Endothelial cell of umbilical vein (primary cell): ENCODE measurements at regions of chr1 and their contacts with region 1.

Region 1: GRCh38 chr1:200979574-200980451 is 43.7 kb downstream of the KIF21B start:
- DNase-seq: peak; percentile 4
- H3K4me3 ChIP-seq: no peak overlapping the region
- H3K27ac ChIP-seq: no peak overlapping the region
- H3K4me1 ChIP-seq: no peaks in the 10 kb centered on the region
- H3K27me3 ChIP-seq: no peaks in the 10 kb centered on the region
- CTCF ChIP-seq: peak; percentile 50 to 69
- POLR2A ChIP-seq: no peak

Region 2: DNA sequence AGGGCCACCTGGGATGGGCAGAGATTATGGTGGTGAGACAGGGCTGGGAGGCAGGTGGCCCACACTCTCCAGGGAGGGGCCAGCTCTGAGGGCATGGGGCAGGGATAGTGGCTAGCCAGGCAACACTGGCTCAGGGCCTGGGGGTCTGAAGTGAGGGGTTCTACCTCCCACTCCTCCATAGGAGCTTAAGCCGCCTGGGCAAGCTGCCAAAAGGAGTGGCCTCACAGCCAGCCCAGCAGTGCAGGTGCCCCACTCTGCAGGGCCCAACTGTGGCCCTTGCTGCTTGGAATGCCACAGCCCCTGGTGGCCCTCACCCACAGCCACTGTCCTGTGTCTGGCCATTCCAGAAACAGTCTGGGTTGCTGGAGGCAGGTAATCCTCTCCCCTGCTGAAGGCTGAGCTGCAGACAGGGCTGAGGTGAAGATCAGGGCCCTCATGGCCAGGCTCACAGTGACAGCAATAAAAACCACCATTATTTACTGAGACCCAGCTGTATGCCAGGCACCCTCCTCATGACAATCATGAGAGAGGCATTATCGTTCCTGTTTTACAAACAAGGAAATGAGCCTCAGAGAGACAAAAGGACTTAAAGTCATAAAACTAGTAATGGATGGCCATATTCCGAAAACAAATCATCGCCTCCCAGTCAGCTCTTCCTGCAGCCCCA is 12.7 kb after region 1 on chr1:
- CTCF ChIA-PET with region 1: interaction called, 10 read pairs
- POLR2A ChIA-PET with region 1: no interaction called
- dilution Hi-C with region 1: no loop called
- intact Hi-C with region 1: no loop called
- DNase-seq: no peak
- H3K4me3 ChIP-seq: no peak overlapping the region
- H3K27ac ChIP-seq: no peak overlapping the region
- H3K4me1 ChIP-seq: no peaks in the 10 kb centered on the region
- H3K27me3 ChIP-seq: no peaks in the 10 kb centered on the region
- CTCF ChIP-seq: no peak
- POLR2A ChIP-seq: no peak

Region 3: GRCh38 chr1:201016211-201016651 is 36.4 kb after region 1 on chr1:
- CTCF ChIA-PET with region 1: interaction called, 94 read pairs
- POLR2A ChIA-PET with region 1: no interaction called
- dilution Hi-C with region 1: no loop called
- intact Hi-C with region 1: no loop called
- DNase-seq: peak; percentile 34
- H3K4me3 ChIP-seq: no peak overlapping the region
- H3K27ac ChIP-seq: peak overlapping the region; percentile 4
- H3K4me1 ChIP-seq: peaks cover 36% of the 10 kb centered on the region
- H3K27me3 ChIP-seq: no peaks in the 10 kb centered on the region
- CTCF ChIP-seq: no peak
- POLR2A ChIP-seq: no peak

Region 4: DNA sequence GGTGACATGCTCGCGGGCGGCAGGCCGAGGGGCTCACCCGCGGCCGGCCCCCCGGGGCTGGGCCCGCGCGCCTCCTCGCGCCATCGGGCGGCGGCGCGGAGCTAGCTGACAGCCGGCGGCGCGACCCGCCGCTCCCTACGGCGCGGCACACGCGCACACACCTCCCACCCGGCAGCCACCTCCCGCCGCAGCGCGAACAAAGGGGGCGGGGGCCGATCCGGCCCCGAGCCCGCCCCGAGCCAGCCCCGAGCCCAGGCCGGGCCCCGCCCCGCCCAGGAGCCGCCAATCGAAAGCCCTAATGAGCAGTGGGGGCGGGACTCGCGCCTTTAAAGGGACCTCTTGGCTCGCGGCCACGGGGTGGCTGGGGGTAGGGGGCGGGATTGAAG is 43.7 kb after region 1 on chr1 and contains the start of gene KIF21B:
- CTCF ChIA-PET with region 1: interaction called, 94 read pairs
- POLR2A ChIA-PET with region 1: no interaction called
- dilution Hi-C with region 1: no loop called
- intact Hi-C with region 1: no loop called
- DNase-seq: peak; percentile 75
- H3K4me3 ChIP-seq: peak within 1 kb of the TSS; percentile 11 to 49 (median 13)
- H3K27ac ChIP-seq: no peak within 1 kb of the TSS
- H3K4me1 ChIP-seq: peaks cover 37% of the 10 kb centered on the region
- H3K27me3 ChIP-seq: no peaks in the 10 kb centered on the region
- CTCF ChIP-seq: no peak
- POLR2A ChIP-seq: no peak
- total RNA-seq, gene KIF21B: 4.4 and 4.7 TPM in 2 replicates

Region 5: GRCh38 chr1:201042779-201043461 is 63.1 kb after region 1 on chr1:
- CTCF ChIA-PET with region 1: interaction called, 586 read pairs
- POLR2A ChIA-PET with region 1: no interaction called
- dilution Hi-C with region 1: no loop called
- intact Hi-C with region 1: loop called (anchors 1 kb)
- DNase-seq: peak; percentile 73
- H3K4me3 ChIP-seq: no peak overlapping the region
- H3K27ac ChIP-seq: no peak overlapping the region
- H3K4me1 ChIP-seq: no peaks in the 10 kb centered on the region
- H3K27me3 ChIP-seq: peaks cover 0 to 2% of the 10 kb centered on the region in 2 experiments
- CTCF ChIP-seq: peak; percentile 86 to 91
- POLR2A ChIP-seq: no peak

Region 6: GRCh38 chr1:201119206-201120197 is 139.7 kb after region 1 on chr1:
- CTCF ChIA-PET with region 1: interaction called, 11 read pairs
- POLR2A ChIA-PET with region 1: no interaction called
- dilution Hi-C with region 1: no loop called
- intact Hi-C with region 1: no loop called
- DNase-seq: peak; percentile 47
- H3K4me3 ChIP-seq: no peak overlapping the region
- H3K27ac ChIP-seq: no peak overlapping the region
- H3K4me1 ChIP-seq: no peaks in the 10 kb centered on the region
- H3K27me3 ChIP-seq: peaks cover 36 to 55% of the 10 kb centered on the region in 2 experiments
- CTCF ChIP-seq: peak; percentile 69 to 79
- POLR2A ChIP-seq: no peak